ENCODE measurements at regions of chr9 and their contacts with region 1.

Region 1: DNA sequence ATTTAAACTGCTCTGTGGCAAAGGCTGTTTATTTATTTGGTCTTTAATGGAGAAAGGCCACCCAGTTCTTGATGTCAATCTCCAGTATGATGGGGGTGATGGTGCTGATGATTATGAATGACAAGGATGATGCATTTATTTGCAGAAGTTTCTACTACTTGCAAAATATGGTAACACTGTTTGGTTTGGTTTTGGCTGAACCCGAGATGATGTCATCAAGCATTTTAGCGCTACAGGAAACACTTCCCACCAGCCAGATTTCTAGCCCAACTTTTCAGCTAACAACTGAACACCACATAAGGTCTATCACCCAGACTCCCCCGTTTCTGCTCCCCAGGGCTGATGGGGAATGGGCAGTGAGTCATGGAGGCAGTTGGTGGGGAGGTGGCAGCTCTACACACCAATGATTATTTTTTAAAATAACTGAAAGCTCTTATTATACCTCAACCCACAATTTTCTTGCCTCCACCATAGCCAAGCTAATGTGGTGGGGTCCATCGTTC is 303.0 kb downstream of the CEMIP2 start:
- DNase-seq: no peak

Region 2: DNA sequence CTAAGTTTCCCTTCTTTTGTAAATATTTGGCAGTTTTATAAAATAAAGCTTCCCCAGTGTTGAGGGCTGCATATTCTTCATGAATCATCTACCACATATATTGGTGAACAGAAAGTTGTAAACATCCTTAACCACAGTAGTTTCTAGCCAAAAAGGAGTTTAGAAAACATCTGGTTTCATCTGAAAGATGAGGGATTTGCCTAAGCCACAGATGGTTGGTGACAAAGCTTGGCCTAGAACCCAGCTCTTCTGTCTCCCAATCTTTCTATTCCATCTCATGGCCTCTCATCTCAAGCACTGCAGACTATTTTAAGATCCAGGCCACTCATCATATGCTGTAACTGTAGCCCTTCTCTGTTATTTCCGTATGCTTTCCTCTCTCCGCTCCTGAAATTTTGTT is 111.6 kb before region 1 on chr9:
- in situ Hi-C with region 1: loop called (anchors 25 kb)
- DNase-seq: no peak